B cell (primary cell): ENCODE measurements at regions of chr15 and their contacts with region 1.

Region 1: DNA sequence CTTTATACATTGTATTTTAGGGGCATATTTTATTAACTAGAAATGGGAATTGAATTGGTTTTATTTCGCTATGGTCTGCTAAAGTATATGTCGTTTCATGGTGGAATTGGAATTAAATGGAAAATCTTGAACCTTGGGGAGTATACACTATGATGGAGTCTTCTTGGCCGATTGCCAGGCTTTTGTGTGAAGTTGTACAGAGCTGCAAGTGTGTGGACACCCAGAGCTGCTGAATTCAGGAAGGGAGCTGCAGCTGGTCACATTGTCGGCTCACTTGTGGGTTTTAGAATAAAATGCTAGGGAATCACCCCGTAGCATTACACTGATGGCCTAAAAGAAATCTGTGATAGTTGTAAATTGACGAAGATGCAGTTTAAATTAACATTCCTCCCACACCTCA is 35.1 kb downstream of the USP3 start:
- DNase-seq: no peak
- ATAC-seq: no peak
- H3K4me3 ChIP-seq: no peak overlapping the region
- H3K4me3 Mint-ChIP-seq: no peak overlapping the region
- H3K27ac ChIP-seq: peak overlapping the region in 1 of 2 donors; percentile 68
- H3K27ac Mint-ChIP-seq: peak overlapping the region; percentile 48
- H3K4me1 ChIP-seq: peaks cover 41 to 58% of the 10 kb centered on the region in 2 donors
- H3K4me1 Mint-ChIP-seq: peaks cover 74% of the 10 kb centered on the region
- H3K27me3 ChIP-seq: no peaks in the 10 kb centered on the region
- H3K27me3 Mint-ChIP-seq: no peaks in the 10 kb centered on the region
- CTCF ChIP-seq: no peak

Region 2: DNA sequence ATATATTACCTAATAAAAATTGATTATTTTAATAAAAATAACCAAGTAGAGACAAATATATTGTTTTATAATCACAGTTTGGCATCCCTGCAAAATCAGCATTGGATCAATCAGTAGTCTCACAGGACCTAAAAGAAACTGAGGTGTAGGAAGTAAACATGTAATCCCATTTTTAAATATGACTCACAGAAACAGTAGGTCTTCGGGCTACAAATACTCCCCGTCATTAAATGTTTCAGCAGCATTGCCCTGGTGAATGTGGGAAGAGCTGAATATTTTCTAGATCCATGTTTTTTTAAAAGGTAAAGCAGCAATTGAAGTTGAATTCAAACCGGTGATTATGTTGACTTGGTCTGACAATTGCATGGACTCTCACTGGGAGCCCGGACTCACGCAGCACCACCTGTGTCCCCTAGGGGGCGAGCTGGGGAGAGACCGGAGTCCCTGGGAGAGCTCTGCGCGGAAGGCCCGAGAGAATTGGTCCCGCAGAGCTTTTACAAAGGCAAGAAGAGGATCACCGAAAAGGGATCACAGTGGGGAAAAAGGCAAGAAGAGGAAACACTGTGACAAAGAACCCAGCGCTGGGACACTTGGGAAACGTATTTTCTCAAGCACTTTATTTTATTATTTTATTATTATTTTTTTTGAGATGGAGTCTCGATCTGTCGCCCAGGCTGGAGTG is 52.3 kb before region 1 on chr15:
- CTCF ChIA-PET with region 1: interaction called, 11 read pairs
- POLR2A ChIA-PET with region 1: interaction called, 3 read pairs
- intact Hi-C with region 1: no loop called
- DNase-seq: peak; percentile 86
- ATAC-seq: peak; percentile 68
- H3K4me3 ChIP-seq: no peak overlapping the region
- H3K4me3 Mint-ChIP-seq: peak overlapping the region; percentile 80
- H3K27ac ChIP-seq: no peak overlapping the region
- H3K27ac Mint-ChIP-seq: peak overlapping the region; percentile 89
- H3K4me1 ChIP-seq: peaks cover 53 to 78% of the 10 kb centered on the region in 2 donors
- H3K4me1 Mint-ChIP-seq: peaks cover 64% of the 10 kb centered on the region
- H3K27me3 ChIP-seq: no peaks in the 10 kb centered on the region
- H3K27me3 Mint-ChIP-seq: no peaks in the 10 kb centered on the region
- CTCF ChIP-seq: peak; percentile 90

Region 3: DNA sequence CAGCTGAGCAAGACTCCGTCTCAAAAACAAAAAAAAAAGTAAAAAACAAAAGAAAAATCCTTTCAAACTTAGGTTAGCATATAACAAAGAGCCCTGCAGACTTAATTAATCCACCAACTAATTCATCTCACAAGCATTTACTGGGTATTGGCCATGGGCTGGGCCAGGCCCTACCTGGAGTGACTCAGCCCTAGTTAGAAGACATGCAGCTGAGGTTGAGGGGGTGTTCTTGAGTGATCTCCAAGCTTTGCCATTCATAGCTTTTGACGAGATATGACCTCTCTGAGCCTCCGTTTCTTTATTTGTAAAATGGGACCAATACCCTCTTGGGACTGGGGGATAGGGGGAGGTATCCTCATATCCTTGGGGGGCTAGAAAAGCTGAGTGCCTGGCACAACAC is 65.5 kb after region 1 on chr15:
- CTCF ChIA-PET with region 1: no interaction called
- POLR2A ChIA-PET with region 1: no interaction called
- intact Hi-C with region 1: no loop called
- DNase-seq: no peak
- ATAC-seq: no peak
- H3K4me3 ChIP-seq: no peak overlapping the region
- H3K4me3 Mint-ChIP-seq: no peak overlapping the region
- H3K27ac ChIP-seq: no peak overlapping the region
- H3K27ac Mint-ChIP-seq: no peak overlapping the region
- H3K4me1 ChIP-seq: peaks cover 34 to 45% of the 10 kb centered on the region in 2 donors
- H3K4me1 Mint-ChIP-seq: peaks cover 45% of the 10 kb centered on the region
- H3K27me3 ChIP-seq: no peaks in the 10 kb centered on the region
- H3K27me3 Mint-ChIP-seq: no peaks in the 10 kb centered on the region
- CTCF ChIP-seq: no peak